Common myeloid progenitor, CD34-positive (primary cell): ENCODE measurements at regions of chr17 and their contacts with region 1.

Region 1: GRCh38 chr17:75877752-75878173 is 618 bp downstream of the TRIM47 start:
- DNase-seq: peak; percentile 69 to 84 (median 80)
- H3K4me3 ChIP-seq: peak overlapping the region; percentile 39 to 83 (median 69)
- H3K27ac ChIP-seq: no peak overlapping the region
- H3K4me1 ChIP-seq: peaks cover 0 to 55% (median 47%) of the 10 kb centered on the region in 4 experiments
- H3K27me3 ChIP-seq: no peaks in the 10 kb centered on the region

Region 2: DNA sequence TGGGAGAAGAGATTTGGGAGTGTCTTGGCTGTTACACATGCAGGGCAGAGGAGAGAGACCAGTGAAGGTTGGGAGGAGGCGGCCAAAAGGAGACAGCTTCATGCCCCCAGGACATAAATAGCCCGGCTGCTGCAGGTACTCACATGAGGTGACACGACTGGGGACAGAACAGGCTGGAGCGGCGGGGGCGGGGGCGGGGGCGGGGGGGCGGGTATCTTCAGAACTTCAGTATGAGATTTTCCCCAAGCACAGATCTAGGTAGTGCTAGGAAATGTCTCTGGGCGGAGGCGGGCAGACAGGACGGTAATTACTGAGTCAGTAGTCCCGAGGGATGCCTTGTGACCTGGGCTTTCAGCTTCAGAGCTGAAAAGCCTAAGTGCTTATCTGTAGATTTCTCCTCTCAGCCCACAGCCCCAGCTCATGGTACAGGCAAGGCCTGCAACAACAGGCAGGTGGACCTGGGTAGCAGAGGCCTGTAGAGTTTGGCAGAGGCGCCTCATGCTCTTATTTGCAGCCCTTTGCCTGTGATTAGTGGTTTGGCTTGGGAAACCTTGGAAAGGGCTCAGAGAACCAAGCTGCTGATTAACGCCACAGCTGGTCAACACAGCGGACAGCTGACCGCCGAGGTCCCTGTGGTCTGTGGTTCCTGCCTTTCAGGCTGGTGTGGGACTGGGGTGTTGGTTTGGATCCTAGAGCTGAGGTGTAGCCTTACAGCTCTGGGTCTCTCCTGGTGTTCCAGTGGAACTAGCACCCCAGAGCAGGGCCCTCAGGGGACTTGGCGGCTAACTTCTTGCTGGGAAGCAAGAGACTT is 68.7 kb before region 1 on chr17:
- CTCF ChIA-PET with region 1: no interaction called
- POLR2A ChIA-PET with region 1: no interaction called
- DNase-seq: no peak
- H3K4me3 ChIP-seq: no peak overlapping the region
- H3K27ac ChIP-seq: peak overlapping the region in 1 of 2 experiments; percentile 39
- H3K4me1 ChIP-seq: no peaks in the 10 kb centered on the region
- H3K27me3 ChIP-seq: no peaks in the 10 kb centered on the region

Region 3: GRCh38 chr17:75845049-75845860 is 32.5 kb before region 1 on chr17:
- CTCF ChIA-PET with region 1: interaction called, 22 read pairs
- POLR2A ChIA-PET with region 1: no interaction called
- DNase-seq: peak; percentile 83 to 91 (median 90)
- H3K4me3 ChIP-seq: peak overlapping the region in 6 of 7 experiments; percentile 36 to 84 (median 78)
- H3K27ac ChIP-seq: peak overlapping the region; percentile 90 to 95
- H3K4me1 ChIP-seq: peaks cover 0 to 61% (median 53%) of the 10 kb centered on the region in 4 experiments
- H3K27me3 ChIP-seq: no peaks in the 10 kb centered on the region

Region 4: GRCh38 chr17:75855310-75856081 is 22.3 kb before region 1 on chr17 and contains the start of gene WBP2:
- CTCF ChIA-PET with region 1: interaction called, 214 read pairs
- POLR2A ChIA-PET with region 1: interaction called, 6 read pairs
- DNase-seq: peak; percentile 100
- H3K4me3 ChIP-seq: peak within 1 kb of the TSS; percentile 53 to 97 (median 83)
- H3K27ac ChIP-seq: peak within 1 kb of the TSS; percentile 58 to 90
- H3K4me1 ChIP-seq: peaks cover 22 to 60% (median 45%) of the 10 kb centered on the region in 4 experiments
- H3K27me3 ChIP-seq: no peaks in the 10 kb centered on the region

Region 5: GRCh38 chr17:75864448-75864871 is 13.3 kb before region 1 on chr17:
- CTCF ChIA-PET with region 1: interaction called, 214 read pairs
- POLR2A ChIA-PET with region 1: interaction called, 3 read pairs
- DNase-seq: peak; percentile 73 to 91 (median 90)
- H3K4me3 ChIP-seq: peak overlapping the region in 3 of 7 experiments; percentile 13 to 38 (median 19)
- H3K27ac ChIP-seq: peak overlapping the region in 1 of 2 experiments; percentile 73
- H3K4me1 ChIP-seq: peaks cover 7 to 36% (median 26%) of the 10 kb centered on the region in 4 experiments
- H3K27me3 ChIP-seq: no peaks in the 10 kb centered on the region

Region 6: DNA sequence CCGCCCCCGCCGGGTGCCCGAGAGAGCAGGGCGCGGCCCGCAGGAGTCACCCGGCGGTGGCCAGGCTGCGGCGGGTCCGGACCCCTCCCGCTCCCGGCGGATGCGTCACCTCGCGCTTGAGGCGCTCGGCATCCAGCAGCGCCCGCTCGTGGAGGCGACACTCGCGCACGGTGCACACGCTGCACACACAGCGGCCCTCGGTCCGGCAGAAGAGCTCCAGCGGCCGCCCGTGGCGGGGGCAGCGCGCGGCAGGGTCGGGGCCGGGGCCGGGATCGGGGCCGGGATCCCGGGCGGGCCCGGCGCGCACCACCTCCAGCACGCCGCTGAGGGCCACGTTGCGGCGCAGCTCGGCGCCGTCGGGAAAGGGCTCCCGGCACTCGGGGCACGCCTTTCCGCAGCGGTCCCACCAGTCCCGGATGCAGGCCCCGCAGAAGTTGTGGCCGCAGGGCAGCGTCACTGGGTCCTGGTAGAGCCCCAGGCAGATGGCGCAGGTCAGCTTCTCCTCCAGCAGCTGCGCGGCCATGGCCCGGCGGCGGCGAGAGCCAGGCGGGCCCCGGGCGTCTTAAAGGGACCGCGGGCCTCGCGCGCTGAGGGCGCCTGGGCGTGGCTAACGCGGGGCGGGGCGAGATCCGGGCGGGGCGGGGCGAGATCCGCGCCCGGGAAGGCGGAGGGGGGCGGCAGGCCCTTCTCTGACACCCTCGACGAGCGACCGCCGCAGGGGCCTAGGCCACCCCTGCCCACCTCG is 18.8 kb after region 1 on chr17 and contains the start of gene TRIM65:
- CTCF ChIA-PET with region 1: interaction called, 173 read pairs
- POLR2A ChIA-PET with region 1: interaction called, 17 read pairs
- DNase-seq: peak; percentile 83 to 88 (median 83)
- H3K4me3 ChIP-seq: peak within 1 kb of the TSS; percentile 66 to 85 (median 76)
- H3K27ac ChIP-seq: peak within 1 kb of the TSS in 1 of 2 experiments; percentile 70
- H3K4me1 ChIP-seq: peaks cover 2 to 25% (median 20%) of the 10 kb centered on the region in 4 experiments
- H3K27me3 ChIP-seq: no peaks in the 10 kb centered on the region

Region 7: DNA sequence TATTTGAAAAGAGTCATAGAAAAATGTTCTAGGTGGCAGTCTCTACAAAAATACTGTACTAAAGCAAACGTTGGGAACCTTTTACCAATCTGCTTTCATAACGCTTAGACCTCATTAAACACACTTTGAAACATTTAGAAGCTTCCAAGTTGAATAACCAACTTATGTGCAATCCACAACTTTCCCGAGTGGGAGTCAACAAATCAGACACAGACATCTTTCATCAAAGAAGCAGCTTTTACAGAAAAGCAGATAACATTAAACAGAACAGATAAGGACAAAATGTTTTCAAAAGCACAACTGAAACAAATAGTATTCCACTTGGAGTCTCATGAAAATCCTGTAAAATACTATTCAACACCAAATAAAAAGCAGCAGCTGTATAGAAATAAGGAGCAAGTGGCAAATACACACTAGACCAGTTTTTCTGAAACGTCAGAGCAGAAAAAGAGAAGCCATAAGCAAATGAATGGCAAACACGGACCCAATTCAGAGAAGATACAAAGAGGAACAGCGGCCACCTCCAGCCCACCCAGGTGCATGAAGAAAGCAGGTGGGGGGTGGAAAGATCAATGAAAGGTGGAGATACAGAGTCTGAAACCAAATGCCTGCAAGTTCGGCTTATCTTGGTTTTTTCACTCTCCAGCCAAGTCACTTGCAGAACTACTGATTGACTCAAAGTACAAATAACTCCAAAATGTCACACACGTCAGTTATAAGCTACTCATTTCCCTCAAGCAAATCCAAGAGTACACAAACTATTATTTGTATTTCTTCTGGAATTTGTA is 81.5 kb after region 1 on chr17:
- CTCF ChIA-PET with region 1: no interaction called
- POLR2A ChIA-PET with region 1: no interaction called
- DNase-seq: no peak
- H3K4me3 ChIP-seq: no peak overlapping the region
- H3K27ac ChIP-seq: no peak overlapping the region
- H3K4me1 ChIP-seq: peaks cover 0 to 3% (median 0%) of the 10 kb centered on the region in 4 experiments
- H3K27me3 ChIP-seq: no peaks in the 10 kb centered on the region

Region 8: DNA sequence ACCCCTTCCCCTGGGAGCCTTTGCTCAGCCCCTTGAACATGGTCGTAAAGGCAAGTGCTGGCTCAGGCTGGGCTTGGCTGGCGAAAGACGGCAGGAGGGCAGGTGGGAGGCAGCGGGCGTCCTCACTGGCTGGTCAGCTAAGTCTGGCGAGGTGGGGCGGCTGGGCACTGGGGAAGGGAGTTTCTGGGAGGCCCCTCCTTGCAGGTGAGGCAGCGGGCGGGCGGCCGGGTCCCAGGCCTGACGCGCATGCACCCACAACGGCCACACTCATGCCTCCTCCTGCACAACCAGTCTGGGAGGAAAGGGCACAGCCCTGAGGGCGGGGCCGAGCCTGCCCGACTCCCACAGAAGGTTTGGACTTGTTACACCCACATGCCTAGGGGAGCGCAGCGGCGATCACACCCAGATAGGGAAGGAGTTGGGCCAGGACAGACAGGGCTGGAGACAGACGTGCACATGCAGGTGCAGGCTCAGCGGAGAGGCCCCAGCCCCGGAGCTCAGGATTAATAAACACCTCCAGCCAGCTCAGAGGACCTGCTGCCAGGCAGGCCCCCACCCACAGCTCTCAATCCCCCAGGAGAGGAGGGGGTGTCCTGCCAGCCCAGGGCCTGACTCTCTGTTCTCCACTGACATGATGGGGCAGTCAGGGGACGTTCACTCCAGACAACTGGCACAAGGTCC is 149.5 kb after region 1 on chr17 and contains the start of gene EVPL:
- CTCF ChIA-PET with region 1: no interaction called
- POLR2A ChIA-PET with region 1: no interaction called
- DNase-seq: peak in 1 of 3 donors; percentile 29
- H3K4me3 ChIP-seq: peak within 1 kb of the TSS in 2 of 7 experiments; percentile 19 to 55
- H3K27ac ChIP-seq: no peak within 1 kb of the TSS
- H3K4me1 ChIP-seq: peaks cover 0 to 42% (median 38%) of the 10 kb centered on the region in 4 experiments
- H3K27me3 ChIP-seq: no peaks in the 10 kb centered on the region